Activated B cell treated with CpG ODN at 0.5 μM for 24 hours (primary cell): ENCODE measurements at regions of chr22 and their contacts with region 1.

Region 1: DNA sequence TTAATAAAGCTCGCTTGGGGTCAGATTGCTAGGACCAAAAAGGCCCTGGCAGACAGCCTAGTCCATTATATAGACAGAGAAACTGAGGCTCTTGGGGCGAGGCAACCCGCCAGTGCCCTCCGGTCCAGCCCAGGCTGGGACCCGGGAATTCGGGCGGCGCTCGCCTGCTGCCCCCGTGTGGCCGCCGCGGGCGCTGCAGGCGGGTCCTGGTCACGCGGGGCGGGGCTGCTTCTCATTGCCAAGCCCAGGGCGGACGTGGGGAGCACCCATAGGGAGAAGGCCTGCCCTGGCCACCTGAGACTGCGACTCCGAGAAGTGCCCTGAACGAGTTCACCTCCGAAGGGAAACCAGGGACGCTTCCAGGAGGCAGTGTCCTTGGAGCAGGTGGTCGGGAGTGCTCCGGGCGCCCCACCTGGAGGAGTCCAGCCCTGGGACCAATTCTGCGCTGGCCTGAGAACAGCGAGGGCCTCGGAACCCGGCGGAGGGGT is 36.0 kb upstream of the CSNK1E start:
- DNase-seq: peak; percentile 77
- ATAC-seq: peak; percentile 82
- H3K4me3 Mint-ChIP-seq: no peak overlapping the region
- H3K27ac Mint-ChIP-seq: peak overlapping the region; percentile 30
- H3K4me1 Mint-ChIP-seq: peaks cover 9% of the 10 kb centered on the region
- H3K27me3 Mint-ChIP-seq: no peaks in the 10 kb centered on the region
- CTCF ChIP-seq: peak; percentile 87

Region 2: DNA sequence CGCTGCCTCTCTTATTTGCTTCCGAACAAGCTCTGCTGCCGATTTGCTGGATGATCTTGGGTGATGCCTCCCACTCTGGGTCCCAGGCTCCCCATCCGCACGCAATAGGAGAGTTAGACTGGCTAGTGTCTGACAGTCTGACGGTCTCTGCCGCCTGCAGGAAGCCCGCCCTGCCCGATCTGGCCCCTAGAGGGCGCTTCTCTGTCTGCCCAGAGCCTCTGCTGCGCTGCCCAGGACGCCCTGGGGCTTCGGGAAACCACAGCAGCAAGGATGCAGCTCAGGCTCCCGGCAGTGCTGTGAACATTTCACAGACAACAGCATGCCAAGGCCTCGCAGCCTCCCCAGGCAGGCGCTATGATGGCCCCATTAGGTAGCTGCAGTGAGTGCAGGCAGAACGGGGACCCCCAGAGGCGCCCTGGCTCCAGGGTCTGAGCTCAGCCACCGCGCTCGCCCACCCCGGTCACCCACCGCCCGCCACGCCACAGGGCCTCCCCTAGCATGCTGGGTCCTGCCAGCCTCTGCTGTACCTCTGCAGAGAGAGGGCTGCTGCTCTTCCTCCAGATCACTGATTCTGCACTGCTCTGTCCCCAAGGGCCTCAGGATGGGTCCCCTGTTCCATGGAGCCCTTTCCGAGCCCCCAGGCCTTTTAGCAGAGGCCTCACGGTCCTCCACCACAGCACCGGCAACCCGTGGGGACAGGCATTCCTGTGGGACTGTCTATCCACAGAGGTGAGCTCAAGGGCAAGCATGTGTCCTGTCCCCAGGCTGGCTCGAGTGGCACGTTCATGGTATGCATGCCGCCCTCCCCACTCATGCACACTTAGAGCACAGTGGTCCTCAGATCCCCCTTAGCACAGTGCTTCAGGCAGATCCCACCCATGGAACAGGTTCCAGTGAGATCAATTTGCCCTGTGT is 238.4 kb before region 1 on chr22:
- CTCF ChIA-PET with region 1: no interaction called
- POLR2A ChIA-PET with region 1: no interaction called
- intact Hi-C with region 1: loop called (anchors 2 kb)
- DNase-seq: peak; percentile 72
- ATAC-seq: peak; percentile 89
- H3K4me3 Mint-ChIP-seq: no peak overlapping the region
- H3K27ac Mint-ChIP-seq: no peak overlapping the region
- H3K4me1 Mint-ChIP-seq: no peaks in the 10 kb centered on the region
- H3K27me3 Mint-ChIP-seq: no peaks in the 10 kb centered on the region
- CTCF ChIP-seq: peak; percentile 65

Region 3: DNA sequence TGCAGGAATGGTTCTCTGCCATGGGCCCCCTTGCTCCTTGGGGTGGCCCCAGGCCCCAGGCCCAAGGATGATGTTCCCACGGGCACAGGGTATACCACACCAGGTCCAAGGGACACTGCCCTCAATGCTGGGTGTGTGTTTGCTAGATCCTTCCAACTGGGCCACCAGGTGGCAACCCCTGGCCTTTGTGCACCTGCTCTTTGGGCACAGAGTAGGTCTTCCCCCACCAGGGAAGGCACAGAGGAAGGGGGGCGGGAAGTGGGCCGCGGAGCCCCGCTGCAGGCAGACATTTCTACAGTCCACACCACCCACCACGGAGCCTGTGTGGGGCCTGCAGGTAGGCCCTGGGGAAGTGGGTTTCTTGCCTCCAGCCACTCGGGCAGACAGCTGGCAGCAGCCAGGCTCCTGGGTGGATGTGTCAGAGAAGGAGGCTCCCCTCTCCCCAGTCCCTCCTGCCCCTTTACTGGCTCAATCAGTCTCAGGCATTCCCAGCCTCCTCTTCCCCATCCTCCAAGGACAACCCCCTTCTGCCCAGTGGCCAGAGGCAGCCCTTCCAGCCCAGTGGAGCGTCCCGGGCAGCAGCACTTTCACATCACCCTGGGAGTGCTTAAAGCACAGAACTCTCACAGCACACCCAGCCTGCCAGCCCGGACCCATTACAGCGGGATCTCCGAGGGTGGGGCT is 129.8 kb before region 1 on chr22:
- CTCF ChIA-PET with region 1: no interaction called
- POLR2A ChIA-PET with region 1: no interaction called
- intact Hi-C with region 1: loop called (anchors 1 kb)
- DNase-seq: no peak
- ATAC-seq: no peak
- H3K4me3 Mint-ChIP-seq: no peak overlapping the region
- H3K27ac Mint-ChIP-seq: no peak overlapping the region
- H3K4me1 Mint-ChIP-seq: peaks cover 2% of the 10 kb centered on the region
- H3K27me3 Mint-ChIP-seq: no peaks in the 10 kb centered on the region
- CTCF ChIP-seq: no peak

Region 4: DNA sequence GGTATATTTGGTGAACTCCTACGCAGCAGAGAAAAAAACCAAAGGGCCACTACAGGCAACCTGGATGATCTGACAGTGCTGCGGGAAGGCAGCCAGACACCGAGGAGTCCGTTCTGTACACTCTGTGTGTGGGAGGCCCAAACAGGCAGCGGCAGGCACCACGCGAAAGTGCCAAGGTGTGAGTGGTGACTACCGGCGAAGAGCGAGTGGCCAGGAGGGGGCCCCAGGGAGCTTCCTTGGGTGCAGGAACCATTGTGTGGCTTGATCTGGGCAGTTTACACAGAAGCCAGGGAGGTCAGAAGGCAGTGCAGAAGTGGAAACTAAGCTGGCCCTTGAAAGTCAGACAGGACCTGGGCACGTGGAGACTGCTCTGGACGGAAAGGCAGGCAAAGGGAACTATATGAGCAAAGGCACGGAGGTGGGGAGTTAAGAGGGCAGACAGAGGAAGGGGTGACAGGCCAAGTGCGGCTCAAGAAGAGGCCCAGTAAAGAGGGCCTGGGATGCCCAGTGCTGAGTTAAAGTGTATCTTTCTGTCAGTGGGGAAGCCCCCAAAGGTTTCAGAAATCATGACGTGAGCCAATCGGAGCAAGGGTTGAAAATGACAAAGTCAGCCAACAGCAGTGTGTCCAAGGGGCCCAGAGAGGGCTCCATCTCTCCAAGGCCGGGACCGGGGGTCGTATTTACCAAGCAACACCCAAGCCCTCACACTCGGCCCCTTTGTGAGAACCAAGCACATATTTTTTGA is 91.0 kb before region 1 on chr22:
- CTCF ChIA-PET with region 1: interaction called, 6 read pairs
- POLR2A ChIA-PET with region 1: no interaction called
- intact Hi-C with region 1: loop called (anchors 1 kb)
- DNase-seq: peak; percentile 34
- ATAC-seq: peak; percentile 38
- H3K4me3 Mint-ChIP-seq: no peak overlapping the region
- H3K27ac Mint-ChIP-seq: peak overlapping the region; percentile 57
- H3K4me1 Mint-ChIP-seq: peaks cover 44% of the 10 kb centered on the region
- H3K27me3 Mint-ChIP-seq: no peaks in the 10 kb centered on the region
- CTCF ChIP-seq: no peak

Region 5: GRCh38 chr22:38298312-38299000 is 54.7 kb before region 1 on chr22:
- CTCF ChIA-PET with region 1: no interaction called
- POLR2A ChIA-PET with region 1: no interaction called
- intact Hi-C with region 1: loop called (anchors 1 kb)
- DNase-seq: peak; percentile 37
- ATAC-seq: peak; percentile 71
- H3K4me3 Mint-ChIP-seq: no peak overlapping the region
- H3K27ac Mint-ChIP-seq: no peak overlapping the region
- H3K4me1 Mint-ChIP-seq: no peaks in the 10 kb centered on the region
- H3K27me3 Mint-ChIP-seq: no peaks in the 10 kb centered on the region
- CTCF ChIP-seq: peak; percentile 23

Region 6: DNA sequence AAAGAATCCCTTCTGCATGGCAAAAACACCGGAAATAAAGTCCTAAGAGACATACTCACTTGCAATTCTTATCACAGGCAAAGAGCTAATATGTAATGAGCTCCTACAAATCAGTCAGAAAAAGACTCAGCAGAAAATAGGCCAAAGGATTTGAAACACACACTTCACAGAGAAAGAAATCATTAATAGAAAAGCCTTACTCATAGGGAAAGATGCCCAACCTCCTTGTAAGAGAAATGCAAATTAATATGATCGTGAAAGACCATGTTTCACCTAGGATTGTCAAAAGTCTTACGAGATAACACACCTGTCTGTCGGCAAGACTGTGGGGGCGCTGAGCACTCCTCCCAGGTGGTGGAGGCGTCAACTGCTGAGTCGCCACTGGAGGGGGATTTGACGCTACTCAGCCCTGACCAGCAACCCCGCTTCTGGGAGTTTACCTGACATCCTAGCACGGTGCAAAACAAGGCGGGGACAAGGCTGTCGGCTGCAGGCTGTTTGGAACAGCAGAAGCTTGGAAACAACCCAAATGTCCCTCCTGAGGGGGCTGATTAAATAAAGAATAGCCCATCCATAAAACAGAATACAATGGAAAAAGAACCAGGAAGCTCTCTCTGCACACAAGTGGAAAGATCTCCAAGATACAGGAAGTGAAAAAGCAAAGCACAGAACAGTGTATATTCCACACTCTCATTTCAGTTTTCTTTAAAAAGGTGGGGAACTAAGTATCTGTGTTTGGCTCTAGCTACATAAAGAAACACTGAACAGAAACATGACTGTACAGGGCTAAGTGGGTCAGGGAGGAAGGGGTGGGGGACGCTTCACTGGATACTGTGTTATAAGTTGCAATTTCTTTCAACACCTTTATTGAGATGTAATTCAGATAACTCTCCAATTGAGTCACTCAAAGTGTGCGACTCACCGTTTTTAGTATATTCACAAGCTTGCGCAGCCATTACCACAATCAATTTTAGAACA is 47.4 kb before region 1 on chr22:
- CTCF ChIA-PET with region 1: interaction called, 5 read pairs
- POLR2A ChIA-PET with region 1: interaction called, 3 read pairs
- intact Hi-C with region 1: loop called (anchors 2 kb)
- DNase-seq: peak; percentile 44
- ATAC-seq: peak; percentile 78
- H3K4me3 Mint-ChIP-seq: peak overlapping the region; percentile 70
- H3K27ac Mint-ChIP-seq: peak overlapping the region; percentile 88
- H3K4me1 Mint-ChIP-seq: peaks cover 49% of the 10 kb centered on the region
- H3K27me3 Mint-ChIP-seq: no peaks in the 10 kb centered on the region
- CTCF ChIP-seq: no peak

Region 7: GRCh38 chr22:38398609-38399461 is 45.6 kb after region 1 on chr22:
- CTCF ChIA-PET with region 1: no interaction called
- POLR2A ChIA-PET with region 1: interaction called, 5 read pairs
- intact Hi-C with region 1: loop called (anchors 5 kb)
- DNase-seq: peak; percentile 79
- ATAC-seq: peak; percentile 73
- H3K4me3 Mint-ChIP-seq: peak overlapping the region; percentile 82
- H3K27ac Mint-ChIP-seq: peak overlapping the region; percentile 84
- H3K4me1 Mint-ChIP-seq: peaks cover 37% of the 10 kb centered on the region
- H3K27me3 Mint-ChIP-seq: no peaks in the 10 kb centered on the region
- CTCF ChIP-seq: no peak